T-cell (primary cell): ENCODE measurements at regions of chr17 and their contacts with region 1.

Region 1: DNA sequence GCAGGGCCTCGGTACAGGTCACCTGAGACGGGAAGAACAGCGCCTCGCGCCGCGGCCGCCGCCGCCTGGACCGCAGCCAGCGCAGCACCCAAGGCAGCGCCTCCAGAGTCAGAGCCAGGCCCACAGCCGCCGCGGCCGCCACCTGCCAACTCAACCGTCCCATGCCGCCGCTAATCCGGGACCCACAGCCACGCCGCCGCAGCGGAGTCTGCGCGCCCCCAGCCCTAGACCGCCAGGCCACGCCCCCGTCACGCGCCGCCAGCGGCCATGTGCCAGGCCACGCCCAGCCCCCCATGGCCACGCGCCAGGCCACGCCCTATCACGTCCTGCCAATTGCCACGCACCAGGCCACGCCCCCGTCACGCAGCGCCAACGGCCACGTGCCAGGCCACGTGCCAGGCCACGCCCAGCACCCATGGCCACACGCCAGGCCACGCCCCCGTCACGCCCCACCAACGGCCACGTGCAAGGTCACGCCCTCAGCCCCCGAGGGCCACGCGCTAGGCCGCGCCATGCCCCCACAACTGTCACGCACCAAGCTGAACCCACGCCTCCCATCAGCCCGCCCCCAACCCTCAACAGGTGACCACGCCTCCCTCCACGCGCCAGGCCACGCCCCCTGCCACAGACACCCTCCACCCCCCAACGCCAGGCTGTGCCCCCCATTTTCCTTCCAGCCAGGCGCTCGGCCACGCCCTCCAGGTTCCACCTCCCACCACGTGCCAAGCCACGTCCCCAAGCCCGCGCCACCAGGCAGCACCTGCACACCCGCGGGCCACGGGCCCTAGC is at the start of gene PLD6:
- DNase-seq: peak; percentile 80 to 96 (median 91)
- ATAC-seq: peak; percentile 74 to 81 (median 75)
- H3K4me3 ChIP-seq: peak within 1 kb of the TSS; percentile 55 to 75
- H3K4me3 Mint-ChIP-seq: peak within 1 kb of the TSS; percentile 83 to 89 (median 87)
- H3K27ac ChIP-seq: peak within 1 kb of the TSS; percentile 69
- H3K27ac Mint-ChIP-seq: peak within 1 kb of the TSS; percentile 87 to 91
- H3K4me1 ChIP-seq: peaks cover 2 to 34% of the 10 kb centered on the region in 2 experiments
- H3K4me1 Mint-ChIP-seq: peaks cover 27 to 36% (median 28%) of the 10 kb centered on the region in 3 donors
- H3K27me3 ChIP-seq: no peaks in the 10 kb centered on the region
- H3K27me3 Mint-ChIP-seq: no peaks in the 10 kb centered on the region
- total RNA-seq, gene PLD6: 7.3 to 18.3 (median 11.1) TPM

Region 2: GRCh38 chr17:17216776-17217175 is 10.5 kb after region 1 on chr17:
- CTCF ChIA-PET with region 1: no interaction called
- POLR2A ChIA-PET with region 1: interaction called in 1 of 2 experiments, 16 read pairs
- DNase-seq: no peak
- ATAC-seq: no peak
- H3K4me3 ChIP-seq: no peak overlapping the region
- H3K4me3 Mint-ChIP-seq: no peak overlapping the region
- H3K27ac ChIP-seq: no peak overlapping the region
- H3K27ac Mint-ChIP-seq: no peak overlapping the region
- H3K4me1 ChIP-seq: no peaks in the 10 kb centered on the region
- H3K4me1 Mint-ChIP-seq: no peaks in the 10 kb centered on the region
- H3K27me3 ChIP-seq: no peaks in the 10 kb centered on the region
- H3K27me3 Mint-ChIP-seq: no peaks in the 10 kb centered on the region

Region 3: GRCh38 chr17:17239832-17240231 is 33.5 kb after region 1 on chr17:
- CTCF ChIA-PET with region 1: no interaction called
- POLR2A ChIA-PET with region 1: no interaction called
- DNase-seq: no peak
- ATAC-seq: no peak
- H3K4me3 ChIP-seq: no peak overlapping the region
- H3K4me3 Mint-ChIP-seq: peak overlapping the region in 2 of 3 donors; percentile 68 to 85
- H3K27ac ChIP-seq: no peak overlapping the region
- H3K27ac Mint-ChIP-seq: no peak overlapping the region
- H3K4me1 ChIP-seq: peaks cover 3 to 24% of the 10 kb centered on the region in 2 experiments
- H3K4me1 Mint-ChIP-seq: peaks cover 22 to 33% (median 24%) of the 10 kb centered on the region in 3 donors
- H3K27me3 ChIP-seq: no peaks in the 10 kb centered on the region
- H3K27me3 Mint-ChIP-seq: no peaks in the 10 kb centered on the region